ENCODE measurements at regions of chr3 and their contacts with region 1.

Region 1: DNA sequence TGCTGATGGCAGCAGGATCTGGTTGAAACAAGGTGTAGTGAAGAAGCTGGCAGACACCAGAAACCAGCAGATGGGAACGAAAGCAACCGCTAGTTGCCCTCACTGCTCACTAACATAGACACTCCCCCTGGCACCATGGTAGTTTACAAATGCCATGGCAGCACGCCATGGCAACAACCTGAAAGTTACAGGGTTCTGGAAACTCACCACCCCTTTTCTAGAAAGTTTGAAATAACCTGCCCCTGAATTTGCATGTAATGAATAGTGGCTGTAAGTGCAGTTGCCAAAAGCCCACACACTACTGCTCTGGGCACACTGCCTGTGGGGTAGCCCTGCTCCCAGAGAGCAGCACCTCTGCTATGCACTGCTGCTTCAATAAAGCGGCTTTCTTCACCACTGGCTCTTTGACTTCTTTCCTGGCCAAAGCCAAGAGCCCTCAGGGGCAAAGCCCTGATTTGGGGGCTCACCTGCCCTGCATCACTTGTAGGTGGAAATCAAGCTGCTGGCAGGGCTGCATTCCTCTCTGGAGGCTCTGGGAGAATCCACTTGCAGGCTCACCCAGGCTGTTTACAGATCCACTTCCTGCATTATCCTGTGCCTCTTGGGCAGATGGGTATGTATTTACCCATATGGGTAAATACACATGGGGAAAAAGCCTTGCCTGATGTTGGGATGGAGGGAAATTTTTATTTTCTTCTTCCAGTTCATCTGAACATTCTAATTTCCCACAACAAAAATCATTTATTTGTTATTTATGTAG is 2.0 kb upstream of the GP9 start:
- DNase-seq: peak in 1 of 2 experiments; percentile 47
- H3K4me3 ChIP-seq: no peak overlapping the region
- H3K27ac ChIP-seq: no peak overlapping the region
- H3K4me1 ChIP-seq: no peaks in the 10 kb centered on the region
- H3K27me3 ChIP-seq: no peaks in the 10 kb centered on the region
- CTCF ChIP-seq: no peak

Region 2: GRCh38 chr3:127672516-127673190 is 1386.0 kb before region 1 on chr3 and contains the start of gene ABTB1:
- CTCF ChIA-PET with region 1: no interaction called
- POLR2A ChIA-PET with region 1: no interaction called
- intact Hi-C with region 1: loop called (anchors 10 kb)
- DNase-seq: peak; percentile 54 to 79
- H3K4me3 ChIP-seq: peak within 1 kb of the TSS; percentile 85
- H3K27ac ChIP-seq: peak within 1 kb of the TSS; percentile 56
- H3K4me1 ChIP-seq: peaks cover 7% of the 10 kb centered on the region; the same call in 1 of the 2 replicates
- H3K27me3 ChIP-seq: no peaks in the 10 kb centered on the region
- CTCF ChIP-seq: no peak
- total RNA-seq, gene ABTB1: 39.1 and 57.1 TPM in 2 replicates

Region 3: DNA sequence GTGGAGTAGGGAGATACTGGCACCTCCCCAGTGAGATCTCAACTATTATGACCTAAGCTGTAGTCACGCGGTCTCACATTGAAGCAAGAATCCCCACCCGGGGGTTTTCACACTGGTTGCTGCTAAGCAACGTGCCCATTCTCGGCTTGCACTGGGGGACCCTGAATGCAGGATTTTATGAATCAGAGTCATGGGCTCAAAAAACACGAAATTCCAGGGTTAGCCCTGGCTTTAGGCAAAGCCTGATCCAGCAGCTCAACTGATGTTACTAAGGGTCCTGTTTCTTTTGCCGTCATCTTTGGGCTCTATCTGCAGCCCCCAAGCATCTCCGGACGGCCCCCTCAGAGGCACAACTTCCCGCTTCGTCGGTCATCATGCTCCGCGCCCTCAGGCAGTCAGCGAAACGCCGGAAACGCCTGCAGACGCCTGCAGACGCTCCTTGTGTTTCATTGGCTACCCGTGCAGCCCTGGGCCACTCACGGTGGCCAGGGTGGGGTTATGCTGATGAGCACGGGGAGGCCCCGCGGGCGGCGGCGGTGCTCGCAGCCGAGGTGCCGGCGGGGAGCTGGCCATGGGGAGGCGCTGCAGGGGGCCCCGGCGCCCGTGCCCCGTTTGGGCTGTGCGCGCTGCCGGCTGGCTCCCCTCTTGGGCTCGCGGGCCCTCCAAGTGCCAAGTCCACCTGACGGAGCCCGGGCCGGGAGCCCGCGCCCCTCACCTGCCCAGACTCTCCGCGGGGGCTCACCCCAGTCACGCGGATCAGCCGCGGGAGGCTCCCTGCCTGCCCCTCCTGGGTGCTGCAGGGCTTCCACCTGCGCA is 31.7 kb before region 1 on chr3:
- CTCF ChIA-PET with region 1: interaction called, 13 read pairs
- POLR2A ChIA-PET with region 1: no interaction called
- intact Hi-C with region 1: no loop called
- DNase-seq: peak; percentile 84 to 94
- H3K4me3 ChIP-seq: peak overlapping the region; percentile 50; the same call in 1 of the 2 replicates
- H3K27ac ChIP-seq: no peak overlapping the region
- H3K4me1 ChIP-seq: 0 out of 2 replicates have a peak, but pooled peaks cover 4% of the 10 kb centered on the region
- H3K27me3 ChIP-seq: no peaks in the 10 kb centered on the region
- CTCF ChIP-seq: peak; percentile 66

Region 4: DNA sequence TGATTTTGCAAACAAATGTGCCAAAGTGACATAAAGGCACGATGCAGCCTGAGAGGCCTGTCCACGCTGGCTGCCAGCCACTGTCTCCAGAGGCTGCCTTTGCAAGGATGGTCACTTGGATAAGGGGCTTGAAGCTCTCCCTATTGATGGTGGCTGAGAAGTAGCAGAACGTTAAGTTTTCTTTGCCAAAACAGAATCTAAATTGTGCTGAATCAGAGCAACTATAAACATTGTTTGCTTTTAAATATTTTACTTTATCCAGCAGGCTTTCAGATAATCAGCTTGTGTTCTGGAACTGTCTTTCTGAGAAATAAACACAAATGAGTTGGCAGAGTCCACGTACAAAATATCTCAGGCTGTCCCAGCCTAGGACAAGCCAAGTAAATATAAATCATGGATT is 148.9 kb after region 1 on chr3:
- CTCF ChIA-PET with region 1: no interaction called
- POLR2A ChIA-PET with region 1: no interaction called
- intact Hi-C with region 1: no loop called
- DNase-seq: no peak
- H3K4me3 ChIP-seq: no peak overlapping the region
- H3K27ac ChIP-seq: no peak overlapping the region
- H3K4me1 ChIP-seq: peaks cover 16% of the 10 kb centered on the region
- H3K27me3 ChIP-seq: no peaks in the 10 kb centered on the region
- CTCF ChIP-seq: no peak

Region 5: GRCh38 chr3:129316131-129317013 is 257.8 kb after region 1 on chr3:
- CTCF ChIA-PET with region 1: no interaction called
- POLR2A ChIA-PET with region 1: no interaction called
- intact Hi-C with region 1: loop called (anchors 10 kb)
- DNase-seq: peak; percentile 53 to 90
- H3K4me3 ChIP-seq: peak overlapping the region; percentile 90
- H3K27ac ChIP-seq: peak overlapping the region; percentile 61
- H3K4me1 ChIP-seq: peaks cover 8% of the 10 kb centered on the region; the same call in 1 of the 2 replicates
- H3K27me3 ChIP-seq: no peaks in the 10 kb centered on the region
- CTCF ChIP-seq: peak; percentile 65

Measured in PC-9 (cell line).